ENCODE measurements at regions of chr12 and their contacts with region 1.

Region 1: GRCh38 chr12:52924764-52925716 is 20.2 kb upstream of the KRT8 start:
- DNase-seq: peak; percentile 80 to 92 (median 86)
- ATAC-seq: peak; percentile 83
- H3K4me3 ChIP-seq: peak overlapping the region; percentile 10; the same call in 1 of the 2 replicates
- H3K27ac ChIP-seq: peak overlapping the region; percentile 80
- H3K4me1 ChIP-seq: peaks cover 31 to 48% of the 10 kb centered on the region in 2 experiments
- H3K27me3 ChIP-seq: no peaks in the 10 kb centered on the region
- CTCF ChIP-seq: no peak
- EP300 ChIP-seq: peak; percentile 84
- POLR2A ChIP-seq: no peak
- RAD21 ChIP-seq: 0 out of 4 replicates have a peak, but pooled peaks of 1 of the 2 experiments have one; percentile 3

Region 2: DNA sequence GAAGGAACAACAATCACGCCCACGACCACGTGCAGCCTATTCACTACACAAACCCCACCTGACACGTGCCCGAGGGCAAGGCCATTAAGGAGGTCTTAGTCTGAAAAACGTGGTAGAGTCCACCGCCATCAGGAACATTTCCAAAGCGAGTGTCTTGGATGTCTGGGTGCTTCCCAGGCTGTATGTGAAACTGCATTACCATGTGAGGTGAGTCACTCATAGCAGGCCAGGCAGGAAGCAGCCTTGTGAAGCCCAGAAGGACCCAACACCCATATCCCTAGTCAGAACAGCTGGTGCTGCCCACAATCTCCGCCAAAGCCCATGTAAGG is 87.7 kb before region 1 on chr12:
- CTCF ChIA-PET with region 1: no interaction called
- POLR2A ChIA-PET with region 1: no interaction called
- in situ Hi-C with region 1: no loop called
- intact Hi-C with region 1: no loop called
- DNase-seq: peak in 1 of 4 experiments; percentile 31
- ATAC-seq: no peak
- H3K4me3 ChIP-seq: no peak overlapping the region
- H3K27ac ChIP-seq: no peak overlapping the region
- H3K4me1 ChIP-seq: peaks cover 13% of the 10 kb centered on the region in 2 experiments; a peak in 3 of 5 replicates
- H3K27me3 ChIP-seq: peaks cover 18 to 66% of the 10 kb centered on the region in 2 experiments
- CTCF ChIP-seq: no peak
- EP300 ChIP-seq: no peak
- POLR2A ChIP-seq: no peak
- RAD21 ChIP-seq: no peak

Region 3: GRCh38 chr12:52942066-52942900 is 17.2 kb after region 1 on chr12:
- CTCF ChIA-PET with region 1: interaction called, 3 read pairs
- POLR2A ChIA-PET with region 1: interaction called, 17 read pairs
- in situ Hi-C with region 1: no loop called
- intact Hi-C with region 1: no loop called
- DNase-seq: peak in 3 of 4 experiments; percentile 4 to 40 (median 31)
- ATAC-seq: no peak
- H3K4me3 ChIP-seq: no peak overlapping the region
- H3K27ac ChIP-seq: no peak overlapping the region
- H3K4me1 ChIP-seq: peaks cover 41 to 46% of the 10 kb centered on the region in 2 experiments
- H3K27me3 ChIP-seq: no peaks in the 10 kb centered on the region
- CTCF ChIP-seq: no peak
- EP300 ChIP-seq: no peak
- POLR2A ChIP-seq: no peak
- RAD21 ChIP-seq: no peak

Region 4: GRCh38 chr12:52949413-52950331 is 24.6 kb after region 1 on chr12:
- CTCF ChIA-PET with region 1: interaction called, 3 read pairs
- POLR2A ChIA-PET with region 1: interaction called, 16 read pairs
- in situ Hi-C with region 1: no loop called
- intact Hi-C with region 1: loop called (anchors 2 kb)
- DNase-seq: peak; percentile 82 to 93 (median 86)
- ATAC-seq: peak; percentile 87
- H3K4me3 ChIP-seq: peak overlapping the region; percentile 99
- H3K27ac ChIP-seq: peak overlapping the region; percentile 100
- H3K4me1 ChIP-seq: peaks cover 47 to 58% of the 10 kb centered on the region in 2 experiments
- H3K27me3 ChIP-seq: no peaks in the 10 kb centered on the region
- CTCF ChIP-seq: no peak; a peak in 1 of 6 replicates
- EP300 ChIP-seq: peak; percentile 81
- POLR2A ChIP-seq: peak; percentile 96
- RAD21 ChIP-seq: no peak; a peak in 2 of 4 replicates